A673 (cell line): ENCODE measurements at regions of chr6 and their contacts with region 1.

Region 1: DNA sequence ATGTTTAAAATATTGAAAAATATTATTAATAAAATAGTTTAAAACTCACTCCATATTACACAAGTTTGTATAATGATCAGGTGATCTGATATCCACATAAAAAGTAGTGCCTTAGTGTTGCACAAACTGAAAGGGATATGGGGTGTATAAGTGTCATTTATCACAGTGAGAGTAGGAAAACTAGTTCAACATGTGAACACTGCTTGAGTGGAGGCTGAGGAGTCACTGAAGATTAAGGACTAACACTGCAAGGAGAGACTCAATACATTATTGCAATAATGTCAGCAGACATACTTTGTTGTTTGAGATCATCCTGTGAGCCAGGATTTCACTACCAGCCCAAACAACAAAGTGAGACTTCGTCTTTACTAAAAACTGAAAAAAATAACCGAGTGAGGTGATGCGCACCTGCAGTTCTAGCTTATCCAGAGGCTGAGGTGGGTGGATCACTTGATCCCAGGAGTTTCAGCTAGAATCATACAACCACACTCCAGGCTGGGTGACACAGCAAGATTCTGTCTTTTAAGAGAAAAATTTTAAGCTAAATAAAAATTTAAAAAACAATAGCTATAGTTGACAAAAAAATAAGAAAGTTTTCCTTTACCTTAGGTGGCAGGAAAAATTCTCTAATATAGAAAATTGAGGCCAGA is 2.4 kb upstream of the KHDC1L start:
- DNase-seq: no peak
- H3K4me3 ChIP-seq: no peak overlapping the region
- H3K27ac ChIP-seq: no peak overlapping the region
- H3K4me1 ChIP-seq: no peaks in the 10 kb centered on the region
- H3K27me3 ChIP-seq: no peaks in the 10 kb centered on the region
- CTCF ChIP-seq: no peak

Region 2: DNA sequence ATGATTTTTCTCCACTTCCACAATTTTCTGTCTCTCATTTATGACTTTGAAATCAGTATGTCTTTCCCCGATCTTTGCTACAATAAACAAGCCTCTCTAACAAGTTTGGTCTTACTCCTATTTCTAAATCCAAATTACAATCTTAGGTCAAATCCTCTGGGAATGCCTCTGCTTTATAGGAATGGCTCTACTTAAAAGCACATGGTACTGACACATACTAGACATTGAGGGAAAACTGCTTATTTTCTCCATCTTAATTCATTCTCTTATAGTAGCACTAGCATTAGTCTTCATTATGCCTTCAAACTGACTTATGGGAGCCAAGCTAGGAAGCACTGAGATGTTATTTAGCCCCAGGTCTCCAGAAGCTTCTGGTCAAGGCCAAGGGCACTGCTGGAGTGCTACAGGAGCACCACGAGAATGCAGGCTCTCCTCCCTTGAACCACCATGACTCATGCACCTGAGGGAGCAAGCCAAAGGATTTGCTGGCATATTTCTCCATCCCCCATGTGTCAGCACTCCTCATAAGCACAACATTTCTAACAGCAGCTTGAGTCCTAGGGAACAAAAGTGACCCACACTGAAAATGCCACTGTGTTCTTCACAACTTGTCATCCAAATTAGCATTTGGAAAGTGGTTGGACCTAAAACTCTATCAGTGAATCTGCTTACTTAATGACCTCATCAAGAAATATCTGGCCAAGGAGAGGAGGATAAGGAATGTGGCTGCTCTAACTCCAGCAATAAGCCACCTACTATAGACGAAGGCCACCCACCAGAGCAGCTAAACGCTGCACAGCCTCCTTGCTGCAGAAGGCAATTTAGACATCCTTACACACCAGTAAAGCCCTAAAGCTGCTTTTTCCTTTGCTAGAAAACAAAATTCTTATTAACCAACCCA is 762.7 kb before region 1 on chr6:
- CTCF ChIA-PET with region 1: no interaction called
- POLR2A ChIA-PET with region 1: no interaction called
- intact Hi-C with region 1: no loop called
- DNase-seq: no peak
- H3K4me3 ChIP-seq: no peak overlapping the region
- H3K27ac ChIP-seq: no peak overlapping the region
- H3K4me1 ChIP-seq: no peaks in the 10 kb centered on the region
- H3K27me3 ChIP-seq: no peaks in the 10 kb centered on the region
- CTCF ChIP-seq: no peak

Region 3: DNA sequence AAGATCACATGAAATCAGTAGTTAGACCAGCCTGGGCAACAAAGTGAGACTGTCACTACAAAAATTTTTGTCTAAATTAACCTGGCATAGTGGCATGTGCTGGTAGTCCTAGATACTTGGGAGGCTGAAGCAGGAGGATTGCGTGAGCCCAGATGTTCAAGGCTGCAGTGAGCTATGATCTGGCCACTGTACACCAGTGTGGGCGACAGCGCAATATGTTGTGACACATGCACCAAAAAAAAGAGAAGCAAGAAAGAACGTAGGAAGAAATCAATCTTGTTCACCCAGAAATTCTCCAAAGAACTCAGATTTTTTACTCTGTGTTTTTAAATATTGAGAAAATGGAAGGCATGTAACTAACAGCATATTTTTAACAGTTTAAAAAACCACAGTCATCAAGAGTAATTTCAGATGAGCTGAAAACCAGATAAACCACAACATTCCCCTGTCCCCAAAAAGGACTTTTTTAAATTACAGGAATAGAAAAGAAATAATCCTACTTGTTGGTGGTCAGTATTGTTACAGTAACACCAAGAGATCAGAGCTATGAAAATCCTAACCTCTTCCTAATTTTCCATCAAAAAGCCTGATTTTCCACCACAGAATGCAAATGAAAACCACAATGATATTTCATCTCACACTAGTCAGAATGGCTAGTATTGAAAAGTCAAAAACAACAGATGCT is 242.6 kb before region 1 on chr6:
- CTCF ChIA-PET with region 1: no interaction called
- POLR2A ChIA-PET with region 1: no interaction called
- intact Hi-C with region 1: no loop called
- DNase-seq: no peak
- H3K4me3 ChIP-seq: no peak overlapping the region
- H3K27ac ChIP-seq: no peak overlapping the region
- H3K4me1 ChIP-seq: no peaks in the 10 kb centered on the region
- H3K27me3 ChIP-seq: no peaks in the 10 kb centered on the region
- CTCF ChIP-seq: no peak

Region 4: DNA sequence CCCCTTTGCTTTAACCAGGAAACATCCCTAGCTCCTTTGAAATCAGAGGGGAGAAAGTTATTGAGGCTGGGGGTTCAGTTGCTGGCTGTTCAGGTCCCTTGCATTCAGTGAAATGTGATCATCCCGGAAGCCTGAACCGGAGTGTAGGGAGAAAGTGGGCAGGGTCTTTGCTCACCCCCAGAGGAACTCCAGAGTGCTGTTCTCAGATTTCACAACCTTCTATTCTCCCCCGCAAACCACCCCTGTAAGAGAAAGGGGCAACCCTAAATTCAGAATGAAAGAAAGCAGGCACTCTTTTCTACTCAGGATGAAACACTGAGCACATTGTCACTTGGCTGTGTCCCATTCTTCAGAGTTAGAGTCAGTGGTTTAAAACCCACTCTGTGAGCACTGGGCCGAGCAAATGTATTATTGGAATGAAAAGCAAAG is 142.3 kb before region 1 on chr6:
- CTCF ChIA-PET with region 1: no interaction called
- POLR2A ChIA-PET with region 1: no interaction called
- intact Hi-C with region 1: no loop called
- DNase-seq: no peak
- H3K4me3 ChIP-seq: no peak overlapping the region
- H3K27ac ChIP-seq: no peak overlapping the region
- H3K4me1 ChIP-seq: no peaks in the 10 kb centered on the region
- H3K27me3 ChIP-seq: no peaks in the 10 kb centered on the region
- CTCF ChIP-seq: no peak

Region 5: DNA sequence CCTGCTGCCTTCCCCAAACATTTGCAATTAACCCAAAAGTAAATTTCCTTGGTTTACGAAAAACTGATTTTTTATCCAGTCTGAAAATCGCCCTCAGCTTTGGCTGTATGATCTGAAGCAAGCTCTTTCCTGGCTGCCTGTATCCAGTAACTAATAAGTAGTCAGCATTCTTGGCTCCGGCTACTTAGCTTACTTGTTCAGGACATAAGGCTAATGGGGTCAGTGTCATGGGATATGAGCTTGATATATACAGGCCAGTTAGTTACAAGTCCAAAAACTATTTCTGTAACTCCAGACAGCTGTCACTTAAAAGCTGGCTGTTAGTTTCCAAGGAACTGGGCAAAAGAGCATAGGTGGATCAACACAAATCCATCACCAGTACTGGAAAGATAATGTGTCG is 58.6 kb before region 1 on chr6:
- CTCF ChIA-PET with region 1: interaction called, 12 read pairs
- POLR2A ChIA-PET with region 1: no interaction called
- intact Hi-C with region 1: no loop called
- DNase-seq: no peak
- H3K4me3 ChIP-seq: no peak overlapping the region
- H3K27ac ChIP-seq: no peak overlapping the region
- H3K4me1 ChIP-seq: no peaks in the 10 kb centered on the region
- H3K27me3 ChIP-seq: no peaks in the 10 kb centered on the region
- CTCF ChIP-seq: no peak

Region 6: DNA sequence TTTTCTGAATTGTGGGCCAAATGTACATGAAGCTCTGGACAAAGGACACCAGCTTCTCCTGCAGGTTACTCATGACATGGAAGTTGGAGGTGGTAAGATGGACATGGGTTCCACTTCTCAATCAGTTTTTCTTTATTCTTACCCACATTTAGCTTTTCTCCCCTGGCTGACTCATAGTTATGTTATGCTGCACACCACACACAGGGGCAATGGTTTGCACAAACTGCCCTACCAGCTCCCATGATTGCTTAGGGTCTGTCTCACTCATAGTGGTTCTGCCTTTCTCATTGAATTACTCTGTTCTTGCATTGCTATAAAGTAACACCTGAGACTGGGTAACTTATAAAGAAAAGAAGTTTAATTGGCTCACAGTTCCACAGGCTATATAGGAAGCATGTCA is 463.8 kb after region 1 on chr6:
- CTCF ChIA-PET with region 1: no interaction called
- POLR2A ChIA-PET with region 1: no interaction called
- intact Hi-C with region 1: no loop called
- DNase-seq: no peak
- H3K4me3 ChIP-seq: no peak overlapping the region
- H3K27ac ChIP-seq: no peak overlapping the region
- H3K4me1 ChIP-seq: no peaks in the 10 kb centered on the region
- H3K27me3 ChIP-seq: no peaks in the 10 kb centered on the region
- CTCF ChIP-seq: no peak